HEK293 (cell line): ENCODE measurements at regions of chr19 and their contacts with region 1.

Region 1: GRCh38 chr19:2427429-2428320 is at the start of gene TIMM13:
- H3K4me3 ChIP-seq: peak within 1 kb of the TSS; percentile 91
- H3K27ac ChIP-seq: peak within 1 kb of the TSS; percentile 86
- H3K4me1 ChIP-seq: 0 out of 2 replicates have a peak, but pooled peaks cover 6% of the 10 kb centered on the region
- CTCF ChIP-seq: no peak

Region 2: DNA sequence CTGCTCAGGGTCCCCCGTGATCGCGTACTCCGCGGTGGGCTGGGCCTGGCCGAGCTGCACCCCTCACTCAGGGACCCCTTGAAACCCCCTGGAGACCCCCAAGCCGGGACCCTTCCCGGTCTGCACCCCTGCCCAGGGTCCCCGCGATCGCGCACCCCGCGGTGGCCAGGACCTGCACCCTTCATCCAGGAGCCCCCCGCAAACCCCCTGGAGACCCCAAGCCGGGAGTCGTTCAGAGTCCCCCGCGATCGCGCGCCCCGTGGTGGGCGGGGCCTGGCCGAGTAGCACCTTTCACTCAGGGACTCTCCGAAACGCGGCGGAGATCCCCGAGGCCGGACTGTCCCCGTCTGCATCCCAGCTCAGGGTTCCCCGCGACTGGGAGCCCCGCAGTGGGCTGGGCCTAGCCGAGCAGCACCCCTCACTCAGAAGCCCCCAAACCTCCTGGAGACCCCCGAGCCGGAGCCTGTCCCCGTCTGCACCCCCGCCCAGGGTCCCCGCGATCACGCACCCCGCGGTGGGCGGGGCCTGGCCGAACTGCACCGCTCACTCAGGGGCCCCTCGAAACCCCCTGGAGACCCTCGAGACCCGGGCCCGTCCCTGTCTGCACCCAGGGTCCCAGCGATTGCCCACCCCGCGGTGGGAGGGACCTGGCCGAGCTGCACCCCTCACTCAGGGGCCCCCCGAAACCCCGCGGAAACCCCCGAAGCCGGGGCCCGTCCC is 28.3 kb after region 1 on chr19:
- CTCF ChIA-PET with region 1: no interaction called
- POLR2A ChIA-PET with region 1: interaction called, 17 read pairs
- H3K4me3 ChIP-seq: peak overlapping the region; percentile 95
- H3K27ac ChIP-seq: peak overlapping the region; percentile 96
- H3K4me1 ChIP-seq: peaks cover 2% of the 10 kb centered on the region; the same call in 1 of the 2 replicates
- CTCF ChIP-seq: no peak